HCT116 (cell line): ENCODE measurements at regions of chr1 and their contacts with region 1.

Region 1: GRCh38 chr1:204363335-204364124 is 3.8 kb upstream of the PLEKHA6 start:
- DNase-seq: peak; percentile 54
- ATAC-seq: peak; percentile 74
- H3K4me3 ChIP-seq: peak overlapping the region; percentile 10 to 26
- H3K27ac ChIP-seq: no peak overlapping the region; the same call in 1 of the 2 replicates
- H3K4me1 ChIP-seq: peaks cover 6 to 20% of the 10 kb centered on the region in 2 experiments; a peak in 3 of 4 replicates
- H3K27me3 ChIP-seq: no peaks in the 10 kb centered on the region
- CTCF ChIP-seq: peak; percentile 94 to 96 (median 95)
- POLR2A ChIP-seq: peak; percentile 9
- RAD21 ChIP-seq: peak; percentile 99

Region 2: DNA sequence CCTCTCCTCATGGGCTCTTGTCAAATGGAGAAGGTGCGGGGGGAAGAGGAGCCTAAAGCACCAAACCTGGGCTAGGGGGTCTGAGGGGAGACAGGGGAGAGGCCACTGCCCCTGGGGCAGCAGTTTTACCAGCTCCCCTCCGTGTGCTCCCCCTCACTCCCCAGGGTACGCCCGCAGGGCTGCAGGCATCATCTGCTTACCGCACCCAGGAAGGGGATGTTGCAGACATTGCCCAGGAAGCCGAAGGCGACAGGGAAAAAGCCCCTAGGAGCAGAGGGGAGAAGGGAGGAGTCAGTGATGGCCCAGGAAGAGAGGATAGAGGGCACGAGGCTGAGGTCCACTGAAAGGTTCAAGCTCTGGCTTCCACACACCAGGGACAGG is 164.5 kb before region 1 on chr1:
- CTCF ChIA-PET with region 1: no interaction called
- POLR2A ChIA-PET with region 1: no interaction called
- RAD21 ChIA-PET with region 1: no interaction called
- intact Hi-C with region 1: no loop called
- DNase-seq: no peak
- ATAC-seq: peak; percentile 15; the same call in 1 of the 2 replicates
- H3K4me3 ChIP-seq: peak overlapping the region in 1 of 2 experiments; percentile 31; a peak in 1 of 4 replicates
- H3K27ac ChIP-seq: peak overlapping the region; percentile 12; the same call in 1 of the 2 replicates
- H3K4me1 ChIP-seq: peaks cover 18 to 52% of the 10 kb centered on the region in 2 experiments
- H3K27me3 ChIP-seq: no peaks in the 10 kb centered on the region
- CTCF ChIP-seq: no peak
- POLR2A ChIP-seq: no peak
- RAD21 ChIP-seq: no peak

Region 3: GRCh38 chr1:204213668-204214662 is 149.6 kb before region 1 on chr1 and contains the start of gene GOLT1A:
- CTCF ChIA-PET with region 1: interaction called, 9 read pairs
- POLR2A ChIA-PET with region 1: no interaction called
- RAD21 ChIA-PET with region 1: interaction called, 6 to 14 read pairs
- intact Hi-C with region 1: loop called (anchors 1 kb)
- DNase-seq: peak; percentile 85
- ATAC-seq: peak; percentile 96
- H3K4me3 ChIP-seq: peak within 1 kb of the TSS; percentile 70 to 72
- H3K27ac ChIP-seq: peak within 1 kb of the TSS; percentile 50; the same call in 1 of the 2 replicates
- H3K4me1 ChIP-seq: peaks cover 6 to 23% of the 10 kb centered on the region in 2 experiments; a peak in 3 of 4 replicates
- H3K27me3 ChIP-seq: no peaks in the 10 kb centered on the region
- CTCF ChIP-seq: peak; percentile 74 to 87 (median 77)
- POLR2A ChIP-seq: no peak
- RAD21 ChIP-seq: peak; percentile 84
- total RNA-seq, gene GOLT1A: 8.0 TPM

Region 4: DNA sequence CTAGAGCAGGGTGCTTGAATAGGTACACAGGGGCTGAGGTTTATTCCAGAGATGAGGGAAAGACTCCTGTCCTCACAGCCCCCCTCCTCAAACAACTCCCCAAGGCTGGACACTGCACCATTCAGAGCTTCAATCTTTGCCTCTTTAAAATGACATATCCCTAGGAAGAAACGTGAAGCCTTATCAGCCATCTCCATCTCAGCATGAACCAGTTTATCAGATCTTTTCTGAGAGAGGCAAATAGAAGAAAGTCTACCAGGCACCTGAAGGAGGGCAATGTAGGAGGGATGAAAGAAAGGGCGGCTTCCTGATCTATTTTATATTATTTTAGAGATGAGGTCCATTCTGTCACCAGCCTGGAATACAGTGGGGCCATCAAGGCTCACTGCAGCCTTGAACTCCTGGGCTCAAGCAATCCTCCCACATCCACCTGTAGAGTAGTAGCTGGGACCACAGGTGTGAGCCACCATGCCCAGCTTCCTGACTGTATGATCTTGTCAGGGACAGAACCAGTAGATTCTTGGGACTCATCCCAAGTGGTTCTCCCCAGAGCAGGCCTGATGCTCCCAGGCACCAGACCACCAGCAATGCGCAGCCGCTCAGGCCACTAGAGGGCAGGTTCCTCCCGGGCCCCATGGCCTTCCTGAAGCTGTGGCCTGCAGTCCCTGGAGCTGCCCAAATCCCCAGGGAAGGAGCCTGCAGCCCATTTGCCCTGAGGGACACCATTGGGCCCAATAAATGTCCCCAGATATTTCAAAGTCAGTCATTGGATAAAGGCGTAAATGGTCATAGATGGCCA is 105.4 kb before region 1 on chr1:
- CTCF ChIA-PET with region 1: interaction called, 42 read pairs
- POLR2A ChIA-PET with region 1: interaction called, 3 read pairs
- RAD21 ChIA-PET with region 1: interaction called, 7 to 11 read pairs
- intact Hi-C with region 1: loop called (anchors 1 kb)
- DNase-seq: peak; percentile 37
- ATAC-seq: peak; percentile 97
- H3K4me3 ChIP-seq: no peak overlapping the region
- H3K27ac ChIP-seq: no peak overlapping the region
- H3K4me1 ChIP-seq: no peaks in the 10 kb centered on the region
- H3K27me3 ChIP-seq: no peaks in the 10 kb centered on the region
- CTCF ChIP-seq: peak; percentile 85 to 93 (median 91)
- POLR2A ChIP-seq: no peak
- RAD21 ChIP-seq: peak; percentile 88